SK-N-SH (cell line): ENCODE measurements at regions of chr9 and their contacts with region 1.

Region 1: DNA sequence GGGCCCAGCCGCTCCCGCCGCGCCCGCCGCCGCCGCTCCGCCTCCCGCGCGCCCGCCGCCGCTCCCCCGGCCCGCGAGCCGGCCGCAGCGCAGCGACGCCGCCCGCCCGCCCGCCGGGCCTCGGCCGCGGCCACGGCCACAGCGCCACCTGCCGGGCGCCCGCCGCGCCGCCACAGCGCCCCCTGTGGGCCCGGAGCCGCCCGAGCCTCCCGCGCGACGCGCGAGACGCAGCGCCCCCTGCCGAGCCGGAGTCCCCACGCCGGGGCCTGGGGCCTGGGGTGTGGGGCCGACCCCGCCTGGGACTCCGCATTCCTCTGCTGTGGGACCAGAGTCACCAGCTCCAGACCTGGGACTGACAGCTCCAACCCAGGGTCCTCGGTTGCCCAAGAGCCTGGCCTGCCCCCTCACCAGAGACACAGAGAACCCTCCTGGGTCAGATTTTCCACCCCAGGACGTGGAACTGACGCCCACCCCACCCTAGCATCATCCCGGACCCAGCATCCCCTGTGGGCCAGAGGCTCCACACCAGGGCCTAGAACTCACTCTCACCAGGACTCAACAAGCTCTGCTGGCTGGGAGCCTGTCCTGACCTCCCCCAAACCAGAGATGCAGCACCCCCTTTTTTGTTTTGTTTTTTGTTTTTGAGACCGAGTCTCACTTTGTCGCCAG is at the start of gene RAPGEF1:
- DNase-seq: peak; percentile 97
- H3K4me3 ChIP-seq: peak within 1 kb of the TSS; percentile 77 to 85
- H3K27ac ChIP-seq: peak within 1 kb of the TSS; percentile 11 to 68; a peak in 2 of 4 replicates
- H3K4me1 ChIP-seq: peaks cover 7 to 12% of the 10 kb centered on the region in 2 experiments; a peak in 3 of 4 replicates
- H3K27me3 ChIP-seq: no peaks in the 10 kb centered on the region
- CTCF ChIP-seq: peak; percentile 79
- EP300 ChIP-seq: no peak
- RAD21 ChIP-seq: peak; percentile 73
- polyA plus RNA-seq, gene RAPGEF1: 26.2 and 27.0 TPM in 2 replicates

Region 2: DNA sequence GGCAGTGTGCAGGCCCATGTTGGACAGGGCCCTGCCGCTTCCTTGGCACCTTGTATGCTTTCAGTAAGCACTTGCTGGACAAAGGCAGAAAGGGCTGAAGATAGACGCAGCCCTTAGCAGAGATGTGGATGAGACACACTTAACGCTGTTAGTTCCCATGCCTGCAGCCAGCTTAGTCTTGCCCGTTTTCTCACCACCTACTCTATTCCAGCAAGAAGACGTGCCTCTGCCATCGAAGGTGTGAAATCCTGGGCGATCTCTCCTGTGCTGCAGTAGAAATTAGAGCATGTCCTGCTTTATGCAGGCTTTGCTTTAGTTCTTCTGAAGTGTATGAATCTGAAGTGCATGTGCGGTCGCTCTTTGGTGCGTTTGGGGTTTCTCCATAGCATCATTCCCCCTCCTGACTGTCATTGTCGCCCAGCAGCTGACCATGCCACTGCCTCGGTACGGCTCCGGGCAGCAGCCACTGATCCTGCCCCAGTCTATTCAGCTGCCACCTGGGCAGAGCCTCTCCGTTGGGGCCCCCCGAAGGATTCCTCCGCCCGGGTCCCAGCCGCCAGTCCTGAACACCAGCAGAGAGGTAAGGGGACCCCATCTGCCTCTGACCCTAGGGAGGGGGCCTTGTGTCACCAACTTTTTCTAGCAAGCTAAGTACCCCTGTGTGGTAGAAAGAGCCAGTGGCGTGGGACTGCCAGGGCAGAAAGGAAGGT is 249.0 kb before region 1 on chr9:
- CTCF ChIA-PET with region 1: interaction called, 10 read pairs
- POLR2A ChIA-PET with region 1: no interaction called
- DNase-seq: no peak
- H3K4me3 ChIP-seq: no peak overlapping the region
- H3K27ac ChIP-seq: no peak overlapping the region
- H3K4me1 ChIP-seq: no peaks in the 10 kb centered on the region
- H3K27me3 ChIP-seq: no peaks in the 10 kb centered on the region
- CTCF ChIP-seq: no peak
- EP300 ChIP-seq: no peak
- RAD21 ChIP-seq: no peak

Region 3: DNA sequence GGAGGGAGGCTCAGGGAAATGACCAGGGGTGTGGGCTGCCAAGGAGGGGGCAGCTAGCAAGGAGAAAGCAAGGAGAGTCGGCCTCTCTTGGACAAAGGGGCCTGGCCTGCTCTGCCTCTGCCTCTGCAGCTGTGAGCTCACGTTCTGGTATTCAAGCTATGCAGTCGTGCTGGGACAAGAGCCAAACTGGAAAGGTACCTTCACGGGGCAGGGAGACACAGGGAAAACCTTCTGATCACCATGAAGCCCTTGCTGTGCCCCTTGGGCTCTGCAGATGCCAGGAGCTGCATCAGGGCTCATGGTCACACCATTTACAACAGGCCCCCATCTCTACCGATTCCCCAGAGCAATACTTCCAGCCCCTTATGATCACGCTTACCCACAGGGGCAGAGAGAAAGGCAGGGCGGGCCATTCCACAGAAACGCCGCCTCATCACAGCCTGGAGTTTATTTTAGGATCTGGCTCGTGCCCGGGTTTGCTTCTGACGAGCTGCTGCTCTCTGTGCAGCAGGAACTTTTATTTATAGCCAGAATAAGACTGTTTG is 131.5 kb before region 1 on chr9:
- CTCF ChIA-PET with region 1: interaction called, 10 read pairs
- POLR2A ChIA-PET with region 1: no interaction called
- DNase-seq: no peak
- H3K4me3 ChIP-seq: 0 out of 4 replicates have a peak overlapping the region, but pooled peaks of 1 of the 2 experiments have one; percentile 5
- H3K27ac ChIP-seq: peak overlapping the region; percentile 61 to 63; a peak in 3 of 4 replicates
- H3K4me1 ChIP-seq: peaks cover 13 to 16% of the 10 kb centered on the region in 2 experiments; a peak in 3 of 4 replicates
- H3K27me3 ChIP-seq: no peaks in the 10 kb centered on the region
- CTCF ChIP-seq: no peak
- EP300 ChIP-seq: no peak
- RAD21 ChIP-seq: no peak

Region 4: GRCh38 chr9:131633491-131634031 is 106.6 kb before region 1 on chr9:
- CTCF ChIA-PET with region 1: interaction called, 15 read pairs
- POLR2A ChIA-PET with region 1: no interaction called
- DNase-seq: no peak
- H3K4me3 ChIP-seq: no peak overlapping the region
- H3K27ac ChIP-seq: no peak overlapping the region
- H3K4me1 ChIP-seq: peaks cover 3 to 4% of the 10 kb centered on the region in 2 experiments; a peak in 2 of 4 replicates
- H3K27me3 ChIP-seq: no peaks in the 10 kb centered on the region
- CTCF ChIP-seq: no peak
- EP300 ChIP-seq: no peak
- RAD21 ChIP-seq: no peak

Region 5: GRCh38 chr9:131695836-131696439 is 44.2 kb before region 1 on chr9:
- CTCF ChIA-PET with region 1: interaction called, 11 read pairs
- POLR2A ChIA-PET with region 1: no interaction called
- DNase-seq: no peak
- H3K4me3 ChIP-seq: no peak overlapping the region
- H3K27ac ChIP-seq: no peak overlapping the region
- H3K4me1 ChIP-seq: peaks cover 0 to 7% of the 10 kb centered on the region in 2 experiments; a peak in 2 of 4 replicates
- H3K27me3 ChIP-seq: no peaks in the 10 kb centered on the region
- CTCF ChIP-seq: no peak
- EP300 ChIP-seq: no peak
- RAD21 ChIP-seq: no peak

Region 6: GRCh38 chr9:131728961-131729360 is 11.2 kb before region 1 on chr9:
- CTCF ChIA-PET with region 1: interaction called, 47 read pairs
- POLR2A ChIA-PET with region 1: interaction called, 3 read pairs
- DNase-seq: peak; percentile 51
- H3K4me3 ChIP-seq: no peak overlapping the region
- H3K27ac ChIP-seq: no peak overlapping the region
- H3K4me1 ChIP-seq: peaks cover 34% of the 10 kb centered on the region in 2 experiments
- H3K27me3 ChIP-seq: no peaks in the 10 kb centered on the region
- CTCF ChIP-seq: no peak
- EP300 ChIP-seq: no peak
- RAD21 ChIP-seq: no peak

Region 7: DNA sequence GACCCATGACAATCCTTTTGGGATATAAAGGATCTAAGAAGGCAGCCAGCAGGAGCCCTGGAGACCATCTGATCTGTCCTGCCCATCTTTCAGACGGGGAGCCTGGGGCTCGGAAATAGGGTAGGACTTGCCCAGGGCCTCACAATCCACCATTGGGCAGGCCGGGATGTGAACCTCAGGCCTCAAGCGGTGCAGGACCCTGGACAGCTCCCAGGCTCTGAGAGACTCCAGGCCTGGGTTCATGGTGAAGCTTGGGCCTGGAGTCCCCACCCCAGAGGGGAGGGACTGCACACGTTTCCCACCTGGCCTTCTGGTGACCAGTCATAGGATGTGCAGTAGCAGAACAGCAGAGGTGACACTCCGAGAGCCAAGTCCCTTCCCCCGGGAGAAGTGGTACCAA is 36.4 kb after region 1 on chr9:
- CTCF ChIA-PET with region 1: no interaction called
- POLR2A ChIA-PET with region 1: no interaction called
- DNase-seq: no peak
- H3K4me3 ChIP-seq: no peak overlapping the region
- H3K27ac ChIP-seq: no peak overlapping the region
- H3K4me1 ChIP-seq: no peaks in the 10 kb centered on the region
- H3K27me3 ChIP-seq: no peaks in the 10 kb centered on the region
- CTCF ChIP-seq: no peak
- EP300 ChIP-seq: no peak
- RAD21 ChIP-seq: no peak

Region 8: DNA sequence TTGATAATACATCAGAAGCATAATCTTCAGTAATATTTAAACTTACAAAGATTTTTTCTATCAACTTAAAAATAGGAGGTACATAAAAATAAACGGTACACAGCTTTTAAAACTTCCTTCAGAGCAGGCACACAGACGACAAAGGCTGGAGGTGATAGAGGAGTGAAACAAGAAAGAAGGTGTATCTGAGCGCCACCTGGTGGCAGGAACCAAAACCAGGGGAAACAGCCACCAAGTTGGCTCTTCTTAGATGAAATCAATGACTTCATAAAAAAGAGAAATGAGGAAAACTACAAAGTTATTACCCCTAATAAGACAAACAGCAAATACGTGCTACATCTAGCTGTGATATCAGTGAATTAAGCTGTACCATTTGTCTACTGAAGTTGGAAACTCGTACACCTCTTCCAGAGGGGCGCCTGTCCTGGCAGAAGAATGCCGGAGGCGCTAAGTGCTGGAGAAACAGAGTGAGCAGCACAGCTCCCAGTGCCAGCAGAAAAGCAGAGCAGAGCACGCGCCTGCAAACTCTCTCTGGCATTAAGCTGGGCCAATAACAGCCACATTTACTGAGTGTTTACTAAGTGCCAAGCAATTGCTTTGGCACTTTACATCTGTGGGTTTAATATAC is 528.7 kb after region 1 on chr9:
- CTCF ChIA-PET with region 1: interaction called, 10 read pairs
- POLR2A ChIA-PET with region 1: no interaction called
- DNase-seq: peak; percentile 70
- H3K4me3 ChIP-seq: no peak overlapping the region; a peak in 1 of 4 replicates
- H3K27ac ChIP-seq: peak overlapping the region; percentile 18 to 55; a peak in 2 of 4 replicates
- H3K4me1 ChIP-seq: peaks cover 0 to 3% of the 10 kb centered on the region in 2 experiments; a peak in 1 of 4 replicates
- H3K27me3 ChIP-seq: no peaks in the 10 kb centered on the region
- CTCF ChIP-seq: peak; percentile 97
- EP300 ChIP-seq: no peak
- RAD21 ChIP-seq: peak; percentile 78